ENCODE measurements at regions of chrX and their contacts with region 1.

Region 1: DNA sequence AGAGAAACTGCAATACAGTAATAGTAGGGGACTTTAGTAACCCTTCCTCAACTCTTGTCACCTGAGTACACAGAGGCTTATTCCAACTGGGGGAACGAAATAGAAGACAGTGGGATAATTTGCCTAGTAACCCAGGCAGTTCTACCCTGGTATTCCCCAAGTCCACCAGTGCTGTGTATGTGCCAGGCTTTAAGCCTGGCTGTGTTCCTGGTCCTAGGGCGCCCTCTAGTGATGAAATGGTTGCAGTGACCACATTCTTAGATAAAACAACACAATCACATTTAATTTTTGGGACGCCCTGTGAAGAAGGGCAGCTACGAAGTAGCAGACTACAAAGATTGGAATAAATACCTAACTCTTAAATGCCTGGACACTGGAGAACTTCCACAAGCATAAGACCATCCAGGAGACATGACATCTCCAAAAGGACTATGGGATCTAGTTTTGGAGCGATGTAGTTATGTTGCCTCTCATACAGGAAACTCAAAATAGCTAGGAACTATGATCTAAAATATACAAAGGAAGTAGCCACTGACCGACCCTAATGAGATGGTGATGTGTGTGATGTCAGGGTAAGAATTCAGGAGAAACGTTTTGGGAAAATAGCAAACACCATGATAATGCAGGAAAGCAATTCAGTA is 288.5 kb upstream of the ZCCHC13 start:
- DNase-seq: peak in 3 of 4 donors; percentile 45 to 63 (median 57)
- ATAC-seq: peak; percentile 98
- H3K4me3 ChIP-seq: no peak overlapping the region
- H3K27ac ChIP-seq: no peak overlapping the region
- H3K4me1 ChIP-seq: no peaks in the 10 kb centered on the region
- H3K27me3 ChIP-seq: no peaks in the 10 kb centered on the region
- CTCF ChIP-seq: peak; percentile 51 to 60

Region 2: GRCh38 chrX:73850124-73851013 is 165.1 kb before region 1 on chrX:
- intact Hi-C with region 1: loop called in 1 of 2 experiments (anchors 5 kb)
- DNase-seq: peak in 2 of 4 donors; percentile 3 to 47
- ATAC-seq: peak; percentile 7
- H3K4me3 ChIP-seq: peak overlapping the region in 1 of 2 donors; percentile 8
- H3K27ac ChIP-seq: no peak overlapping the region
- H3K4me1 ChIP-seq: no peaks in the 10 kb centered on the region
- H3K27me3 ChIP-seq: no peaks in the 10 kb centered on the region
- CTCF ChIP-seq: no peak

Region 3: GRCh38 chrX:73867144-73867543 is 148.4 kb before region 1 on chrX:
- intact Hi-C with region 1: no loop called
- DNase-seq: no peak
- ATAC-seq: no peak
- H3K4me3 ChIP-seq: no peak overlapping the region
- H3K27ac ChIP-seq: no peak overlapping the region
- H3K4me1 ChIP-seq: no peaks in the 10 kb centered on the region
- H3K27me3 ChIP-seq: no peaks in the 10 kb centered on the region
- CTCF ChIP-seq: no peak

Region 4: DNA sequence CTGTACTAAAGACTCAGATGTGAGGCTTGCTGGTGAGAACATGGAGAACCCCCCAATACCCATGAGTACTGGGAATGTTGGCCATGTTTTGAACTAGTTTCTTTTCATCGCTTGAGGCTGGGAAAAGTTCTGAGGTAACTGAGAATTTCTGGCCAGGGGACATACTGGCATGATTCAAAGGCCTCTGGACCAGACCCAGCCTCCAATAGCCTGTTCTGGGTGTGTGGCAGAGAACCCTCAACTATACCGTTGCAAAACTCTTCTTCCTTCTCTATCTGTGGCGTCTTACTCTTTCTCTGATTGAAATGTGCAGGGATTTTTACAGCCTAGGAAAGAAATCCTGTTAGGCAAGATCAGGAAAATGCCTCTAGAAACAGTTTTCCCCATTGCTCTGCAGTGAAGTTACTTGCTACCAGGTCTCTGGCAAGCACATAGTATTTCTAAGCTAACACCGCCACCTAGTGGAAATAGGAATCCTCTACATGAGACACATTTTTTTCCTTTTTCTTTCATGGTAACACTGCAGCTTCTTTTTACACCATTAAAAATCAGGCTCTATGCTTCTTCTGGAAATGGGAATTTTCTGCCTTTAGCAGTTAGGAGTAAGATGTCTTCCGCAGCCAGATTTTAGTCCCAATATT is 117.8 kb after region 1 on chrX:
- intact Hi-C with region 1: no loop called
- DNase-seq: peak in 2 of 4 donors; percentile 62
- ATAC-seq: peak; percentile 95
- H3K4me3 ChIP-seq: no peak overlapping the region
- H3K27ac ChIP-seq: no peak overlapping the region
- H3K4me1 ChIP-seq: no peaks in the 10 kb centered on the region
- H3K27me3 ChIP-seq: no peaks in the 10 kb centered on the region
- CTCF ChIP-seq: peak; percentile 50 to 73

Region 5: DNA sequence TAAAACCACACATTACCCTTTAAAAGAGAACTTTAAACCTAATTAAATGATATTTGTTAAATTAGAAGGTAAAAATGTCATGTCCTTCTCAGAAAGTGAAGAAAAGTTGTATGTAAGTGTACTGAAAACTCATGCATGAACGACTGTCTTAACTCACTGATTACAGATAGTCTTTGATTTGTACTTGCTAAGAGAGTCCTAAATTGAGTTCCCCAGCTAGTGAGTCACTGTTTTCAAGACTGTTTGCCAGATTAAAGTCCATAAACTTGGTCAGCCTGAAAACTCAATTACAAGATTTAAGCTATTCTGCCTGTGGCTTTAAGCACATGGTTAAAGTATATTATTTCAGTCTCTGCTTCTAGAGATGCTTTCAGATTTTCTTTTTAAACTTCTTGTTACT is 163.6 kb after region 1 on chrX:
- intact Hi-C with region 1: no loop called
- DNase-seq: no peak
- ATAC-seq: peak; percentile 25
- H3K4me3 ChIP-seq: no peak overlapping the region
- H3K27ac ChIP-seq: no peak overlapping the region
- H3K4me1 ChIP-seq: no peaks in the 10 kb centered on the region
- H3K27me3 ChIP-seq: no peaks in the 10 kb centered on the region
- CTCF ChIP-seq: no peak

Region 6: DNA sequence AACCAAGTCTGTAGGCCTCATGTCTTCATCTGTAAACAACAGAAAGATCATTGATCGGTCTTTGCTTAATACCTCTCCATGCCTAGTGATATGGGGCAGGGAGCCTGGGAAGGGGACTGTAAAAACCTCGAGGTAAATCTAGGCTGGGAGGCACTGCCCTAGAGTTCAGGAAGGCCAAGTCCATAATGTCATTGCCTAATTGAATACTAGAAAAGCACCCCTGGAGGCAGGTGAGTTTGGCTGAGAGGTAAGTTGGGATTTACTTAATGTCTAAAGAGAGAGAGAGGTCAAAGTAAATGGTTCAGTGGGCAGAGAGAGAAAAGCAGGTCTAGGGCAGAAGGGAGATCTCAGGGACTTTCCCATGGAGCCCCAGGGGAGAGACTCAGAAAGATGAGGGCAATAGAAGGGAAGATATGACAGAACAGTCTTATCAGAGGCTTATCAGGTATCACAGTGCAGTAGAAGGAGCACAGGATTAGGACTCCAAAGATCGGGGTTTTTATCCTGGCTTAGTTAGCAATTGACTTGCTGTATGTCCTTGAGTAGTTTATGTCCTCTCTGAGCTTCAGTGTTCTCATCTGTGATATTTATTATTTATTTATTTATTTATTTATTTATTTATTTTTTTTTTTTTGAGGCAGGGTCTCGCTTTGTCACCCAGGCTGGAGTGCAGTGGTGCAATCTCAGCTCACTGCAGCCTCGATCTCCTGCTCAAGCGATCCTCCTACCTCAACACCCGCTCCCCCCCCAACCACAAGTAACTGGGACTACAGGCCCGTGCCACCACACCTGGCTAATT is 491.0 kb after region 1 on chrX:
- intact Hi-C with region 1: no loop called
- DNase-seq: no peak
- ATAC-seq: no peak
- H3K4me3 ChIP-seq: no peak overlapping the region
- H3K27ac ChIP-seq: no peak overlapping the region
- H3K4me1 ChIP-seq: no peaks in the 10 kb centered on the region
- H3K27me3 ChIP-seq: no peaks in the 10 kb centered on the region
- CTCF ChIP-seq: no peak